Right ventricle myocardium inferior (tissue), 1 donor: ENCODE measurements at regions of chr3 and their contacts with region 1.

Region 1: GRCh38 chr3:70716832-70717231 is 404.4 kb upstream of the MDFIC2 start:
- DNase-seq: peak; percentile 43
- ATAC-seq: no peak

Region 2: DNA sequence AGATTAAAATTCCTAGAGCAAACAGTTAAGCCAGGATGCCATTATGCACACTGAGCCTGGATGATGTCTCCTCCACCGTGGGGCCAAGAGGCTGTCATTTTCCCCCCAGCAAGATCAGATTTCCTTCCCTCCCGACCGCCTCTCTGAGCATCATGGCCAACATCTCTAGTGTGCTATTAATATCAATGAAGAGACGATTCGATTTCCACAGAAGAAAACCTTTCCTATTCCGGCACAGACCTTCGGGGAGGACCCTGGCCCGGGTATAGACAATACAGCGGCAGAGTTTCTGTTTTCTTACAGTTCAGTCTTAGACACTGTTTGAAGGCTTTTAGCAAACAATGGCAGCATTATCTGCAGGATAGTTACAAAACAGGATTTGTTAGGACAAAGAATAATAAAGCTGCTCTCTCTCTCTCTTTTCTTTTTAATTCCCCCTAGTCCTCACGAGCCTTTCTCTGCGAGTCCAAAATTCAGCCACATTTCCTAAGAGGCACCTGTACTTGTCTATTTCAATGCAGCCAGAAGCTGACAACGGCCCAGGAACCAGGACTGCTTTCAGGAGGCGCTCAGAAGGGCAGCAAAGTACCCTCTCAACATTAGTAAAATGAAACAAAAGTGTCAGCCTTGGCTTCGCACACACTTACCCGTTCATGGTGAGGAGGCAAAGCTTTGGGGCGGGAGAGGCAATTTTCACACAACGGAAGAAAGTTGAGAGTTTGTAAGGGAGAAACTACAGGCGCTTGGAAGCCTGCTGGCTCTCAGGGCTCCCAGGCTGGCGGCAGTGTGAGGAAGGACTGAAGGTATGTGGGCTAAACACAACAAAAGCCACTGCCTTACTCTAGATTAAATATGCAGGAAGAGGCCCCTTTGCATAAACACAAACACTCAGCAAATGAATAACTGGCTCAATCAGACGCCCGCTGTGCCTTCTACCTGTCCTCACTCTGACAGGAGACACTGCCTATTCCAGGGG is 588.7 kb after region 1 on chr3:
- intact Hi-C with region 1: loop called (anchors 5 kb)
- DNase-seq: no peak
- ATAC-seq: peak; percentile 86